Activated T-helper 1 cell treated with anti-CD3 and anti-CD28 coated beads, Interleukin-12 subunit alpha, Interleukin-12 subunit beta, Interleukin-2, Interleukin-4 antibody, amounts not matched to agents 30 ng/mL and 10 ng/mL and 1 ng/mL, durations not matched to agents 14 hours and 24 hours and 36 hours (primary cell): ENCODE measurements at regions of chr20 and their contacts with region 1.

Region 1: DNA sequence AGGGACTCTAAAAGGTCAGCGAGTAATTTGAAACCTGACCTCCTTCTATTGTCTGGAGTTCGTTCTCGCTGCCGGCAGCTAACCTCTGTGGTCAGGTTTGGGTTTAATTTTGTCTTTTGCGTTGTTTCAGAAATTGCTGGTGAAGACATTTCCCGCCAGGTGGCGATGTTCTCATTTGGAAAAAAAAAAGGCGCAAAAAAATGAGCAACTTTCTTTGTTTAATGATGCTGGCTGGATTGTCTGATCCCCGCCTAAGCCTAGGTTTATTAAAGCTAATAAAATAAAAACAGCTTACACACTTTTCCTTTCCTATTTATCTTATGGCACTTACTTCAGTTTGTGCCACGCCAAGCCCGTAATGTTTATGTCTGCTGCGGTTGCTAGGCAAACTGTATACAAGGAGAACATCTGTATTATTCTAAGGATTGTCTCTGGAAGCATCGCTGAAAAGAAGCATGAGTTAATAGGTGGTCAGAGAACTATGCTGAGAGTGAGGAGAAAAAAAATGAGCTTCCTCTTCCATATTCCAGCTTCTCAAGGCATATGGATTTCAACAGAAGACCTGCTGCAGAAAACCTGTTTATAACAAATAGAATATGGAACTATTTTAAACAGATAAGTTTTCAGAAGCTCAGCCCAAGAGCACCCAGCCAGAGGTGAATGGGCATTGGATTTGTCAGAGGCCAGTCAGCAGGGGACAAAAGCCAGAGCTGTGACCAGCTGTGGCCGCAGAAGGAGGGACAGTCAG is 205.7 kb downstream of the DOK5 start:
- DNase-seq: no peak
- H3K4me3 Mint-ChIP-seq: no peak overlapping the region
- H3K27ac Mint-ChIP-seq: no peak overlapping the region
- H3K4me1 Mint-ChIP-seq: no peaks in the 10 kb centered on the region
- H3K27me3 Mint-ChIP-seq: peaks cover 2% of the 10 kb centered on the region

Region 2: GRCh38 chr20:56343861-56344381 is 1662.9 kb after region 1 on chr20:
- intact Hi-C with region 1: loop called (anchors 5 kb)
- DNase-seq: no peak
- H3K4me3 Mint-ChIP-seq: no peak overlapping the region
- H3K27ac Mint-ChIP-seq: no peak overlapping the region
- H3K4me1 Mint-ChIP-seq: no peaks in the 10 kb centered on the region
- H3K27me3 Mint-ChIP-seq: peaks cover 60% of the 10 kb centered on the region